ENCODE measurements at regions of chr2 and their contacts with region 1.

Region 1: DNA sequence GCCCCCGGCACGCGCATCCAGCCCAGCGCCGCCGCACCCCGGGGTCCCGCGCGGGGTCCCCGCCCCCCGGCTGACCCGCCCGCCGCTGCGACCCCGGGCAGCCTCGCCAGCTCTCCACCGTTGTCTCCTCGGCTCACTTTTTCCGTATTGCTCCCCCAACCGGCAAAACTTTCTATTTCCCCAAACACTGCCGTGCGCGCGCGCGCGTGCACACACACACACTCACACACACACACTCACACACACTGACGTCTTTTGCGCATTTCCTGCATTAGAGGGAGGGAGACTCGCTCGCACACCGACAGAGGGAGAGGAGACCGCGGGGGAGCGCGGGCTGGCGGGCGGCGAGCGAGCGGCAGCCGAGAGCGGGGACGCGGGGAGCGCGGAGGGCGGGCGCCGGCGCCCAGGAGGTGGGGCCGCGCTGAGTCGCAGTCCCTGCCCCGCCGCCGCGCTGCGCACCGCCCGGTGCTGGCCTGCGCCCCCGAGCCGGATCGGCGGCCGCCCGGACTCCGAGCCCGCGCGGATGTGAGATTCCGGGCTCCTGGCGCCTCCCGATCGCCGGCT is 542 bp upstream of the PRKCE start:
- DNase-seq: peak; percentile 95
- H3K4me3 ChIP-seq: peak overlapping the region; percentile 91 to 98
- H3K27ac ChIP-seq: peak overlapping the region; percentile 98 to 100
- H3K4me1 ChIP-seq: peaks cover 10% of the 10 kb centered on the region
- H3K27me3 ChIP-seq: no peaks in the 10 kb centered on the region
- CTCF ChIP-seq: peak in 3 of 4 experiments; percentile 22 to 73 (median 55)
- POLR2A ChIP-seq: peak; percentile 91

Region 2: GRCh38 chr2:45700407-45701041 is 49.6 kb after region 1 on chr2:
- intact Hi-C with region 1: loop called (anchors 5 kb)
- DNase-seq: no peak
- H3K4me3 ChIP-seq: no peak overlapping the region
- H3K27ac ChIP-seq: no peak overlapping the region
- H3K4me1 ChIP-seq: no peaks in the 10 kb centered on the region
- H3K27me3 ChIP-seq: no peaks in the 10 kb centered on the region
- CTCF ChIP-seq: no peak
- POLR2A ChIP-seq: no peak

Region 3: DNA sequence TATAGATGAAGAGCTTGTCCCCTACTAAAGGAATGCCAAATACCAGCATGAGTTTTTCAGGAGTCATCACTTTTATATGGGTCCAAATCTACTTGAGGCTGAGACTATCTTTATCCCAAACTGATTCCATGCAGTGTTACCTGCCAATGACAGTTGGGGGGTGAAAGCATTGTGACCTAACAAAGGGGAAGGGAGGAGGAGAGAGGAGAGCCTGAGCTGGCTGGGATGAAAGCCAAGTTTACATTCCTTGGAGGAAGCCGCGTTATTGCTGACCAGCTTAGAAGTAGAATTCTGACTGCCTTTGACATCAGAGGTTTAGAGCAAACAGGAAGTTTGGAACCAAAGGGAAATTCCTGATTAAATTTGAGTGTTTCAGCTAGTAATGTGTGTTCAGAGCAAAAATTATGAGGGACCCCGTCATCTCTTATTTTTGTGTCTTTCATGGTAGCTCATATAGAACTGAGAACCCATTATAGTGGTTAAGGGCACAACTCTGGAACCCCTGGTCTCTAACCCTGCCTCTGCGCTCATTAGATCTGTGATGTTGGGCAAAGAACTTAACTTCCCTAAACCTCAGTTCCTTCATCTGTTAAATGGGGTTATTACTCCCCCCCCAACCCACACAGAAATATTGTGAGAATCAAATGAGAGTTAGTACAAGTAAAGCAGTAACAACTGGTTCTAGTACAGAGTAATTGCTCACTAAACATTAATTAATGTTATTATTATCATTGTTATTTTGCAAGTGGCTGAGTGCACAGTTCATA is 447.0 kb after region 1 on chr2:
- intact Hi-C with region 1: no loop called
- DNase-seq: peak; percentile 66
- H3K4me3 ChIP-seq: no peak overlapping the region
- H3K27ac ChIP-seq: peak overlapping the region; percentile 44 to 45
- H3K4me1 ChIP-seq: no peaks in the 10 kb centered on the region
- H3K27me3 ChIP-seq: no peaks in the 10 kb centered on the region
- CTCF ChIP-seq: no peak
- POLR2A ChIP-seq: no peak

Measured in prostate gland (tissue), 2 donors.